GM10248 (cell line): ENCODE measurements at regions of chr13 and their contacts with region 1.

Region 1: GRCh38 chr13:27826379-27827353 is 34.4 kb downstream of the GSX1 start:
- DNase-seq: peak; percentile 83
- CTCF ChIP-seq: peak; percentile 97

Region 2: DNA sequence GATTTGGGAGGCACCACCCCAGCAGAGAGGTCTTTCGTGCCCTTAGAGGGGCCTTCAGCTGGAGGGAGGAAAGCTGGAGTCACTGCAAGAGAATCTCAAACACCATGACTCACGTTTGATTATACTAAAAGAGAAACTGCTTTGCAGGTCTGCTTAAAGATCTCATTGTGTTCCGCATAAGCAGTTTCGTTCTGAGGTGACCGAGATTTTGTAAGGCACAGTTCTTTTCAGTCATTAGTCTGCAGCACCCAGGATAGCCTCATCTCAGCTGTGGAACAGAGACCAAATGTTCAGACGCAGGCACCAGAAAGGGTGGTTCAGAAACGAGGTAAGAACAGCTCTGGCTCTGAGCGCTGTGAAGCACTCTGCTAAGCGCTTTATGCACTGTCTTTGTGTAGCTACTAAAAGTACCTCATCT is 473.5 kb before region 1 on chr13:
- CTCF ChIA-PET with region 1: interaction called, 324 read pairs
- POLR2A ChIA-PET with region 1: no interaction called
- DNase-seq: peak; percentile 91
- CTCF ChIP-seq: no peak

Region 3: GRCh38 chr13:27406178-27406939 is 420.3 kb before region 1 on chr13:
- CTCF ChIA-PET with region 1: interaction called, 21 read pairs
- POLR2A ChIA-PET with region 1: no interaction called
- DNase-seq: peak; percentile 53
- CTCF ChIP-seq: peak; percentile 39

Region 4: DNA sequence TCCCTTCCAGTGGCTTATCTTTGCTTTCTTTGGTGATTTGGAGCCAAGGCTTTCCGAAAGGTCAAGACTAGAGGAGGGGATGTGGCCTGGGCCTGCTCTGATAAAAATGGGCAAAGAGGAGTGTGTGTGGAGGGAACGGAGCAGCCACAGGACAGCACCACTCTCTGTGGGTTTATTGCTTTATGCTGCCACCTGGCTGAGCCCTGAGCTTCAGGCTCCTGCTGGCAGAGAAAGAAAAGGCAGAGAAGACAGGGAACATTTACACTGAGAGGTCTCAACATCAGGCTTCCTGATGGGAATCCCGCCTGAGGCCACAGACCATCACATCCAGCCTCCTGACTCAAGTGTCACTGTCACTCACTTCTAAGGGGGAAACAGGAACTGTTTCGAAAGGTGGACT is 43.6 kb before region 1 on chr13:
- CTCF ChIA-PET with region 1: interaction called, 18 read pairs
- POLR2A ChIA-PET with region 1: no interaction called
- DNase-seq: no peak
- CTCF ChIP-seq: peak; percentile 28

Region 5: DNA sequence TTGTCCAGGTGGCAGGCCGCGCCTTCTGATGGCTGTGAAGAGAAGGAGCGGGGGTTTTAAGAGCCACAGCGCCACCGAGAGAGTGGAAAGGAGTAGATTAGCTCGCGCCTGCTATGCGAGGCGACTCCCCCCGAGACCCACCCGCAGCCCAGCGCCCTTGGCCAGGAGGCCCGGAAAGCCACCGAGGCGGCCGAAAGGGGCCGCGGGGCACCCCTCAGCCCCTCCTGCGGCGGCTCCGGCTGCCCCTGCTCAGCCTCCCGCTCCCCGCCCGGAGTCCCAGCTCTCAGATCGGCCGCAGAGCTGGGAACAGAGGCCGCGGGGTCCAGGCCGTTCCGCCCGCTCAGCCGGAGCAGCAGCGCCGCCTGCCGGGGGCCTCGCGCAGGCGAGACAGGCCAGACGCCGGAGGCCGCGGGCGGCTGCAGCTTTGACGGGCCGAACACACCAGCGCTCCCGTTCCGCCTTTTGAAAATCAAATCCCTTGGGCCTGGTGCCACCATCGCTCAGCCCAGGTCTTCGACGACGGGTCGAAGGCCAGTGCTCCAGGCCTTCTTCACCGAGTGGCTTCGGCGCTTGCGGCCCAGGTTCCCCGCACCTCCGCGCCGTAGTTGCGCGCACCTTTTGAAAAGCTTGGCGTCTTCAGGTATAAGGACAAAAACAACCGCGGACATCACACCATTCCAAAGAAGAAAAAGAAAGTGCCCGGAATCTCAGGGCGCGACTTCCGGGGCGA is 127.2 kb after region 1 on chr13:
- CTCF ChIA-PET with region 1: interaction called, 92 read pairs
- POLR2A ChIA-PET with region 1: interaction called, 3 read pairs
- DNase-seq: peak; percentile 89
- CTCF ChIP-seq: peak; percentile 97

Region 6: DNA sequence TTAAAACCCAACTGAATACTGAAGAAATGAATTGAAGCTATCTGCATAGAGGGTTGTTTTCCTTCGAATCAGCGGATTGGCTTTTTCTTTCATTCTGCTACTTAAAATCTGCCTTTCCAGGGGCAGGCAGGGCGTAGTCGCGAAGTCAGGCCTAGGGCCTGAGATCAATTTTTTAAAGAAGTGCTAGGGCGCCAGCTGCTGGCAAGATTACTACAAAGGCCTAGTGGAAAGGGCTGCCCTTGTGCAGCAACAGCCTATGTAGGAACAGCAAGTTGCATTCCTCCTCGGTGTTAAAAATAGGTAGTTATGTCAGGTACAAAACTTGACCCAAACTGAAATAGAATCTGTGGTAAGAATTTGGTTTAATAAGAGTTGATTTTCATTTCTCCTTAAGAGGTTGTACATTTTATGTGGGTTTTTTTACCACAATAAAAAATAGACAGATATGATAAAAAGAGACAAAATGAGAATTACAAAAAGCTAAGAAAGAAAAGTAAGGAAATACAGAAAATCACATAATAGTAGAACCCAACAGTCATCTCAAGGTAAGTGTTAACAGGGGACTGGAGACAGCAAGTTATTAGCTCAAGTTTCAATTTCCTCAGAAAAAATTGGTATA is 171.3 kb after region 1 on chr13:
- CTCF ChIA-PET with region 1: interaction called, 21 read pairs
- POLR2A ChIA-PET with region 1: no interaction called
- DNase-seq: peak; percentile 51
- CTCF ChIP-seq: peak; percentile 61